ENCODE measurements at regions of chr11 and their contacts with region 1.

Region 1: DNA sequence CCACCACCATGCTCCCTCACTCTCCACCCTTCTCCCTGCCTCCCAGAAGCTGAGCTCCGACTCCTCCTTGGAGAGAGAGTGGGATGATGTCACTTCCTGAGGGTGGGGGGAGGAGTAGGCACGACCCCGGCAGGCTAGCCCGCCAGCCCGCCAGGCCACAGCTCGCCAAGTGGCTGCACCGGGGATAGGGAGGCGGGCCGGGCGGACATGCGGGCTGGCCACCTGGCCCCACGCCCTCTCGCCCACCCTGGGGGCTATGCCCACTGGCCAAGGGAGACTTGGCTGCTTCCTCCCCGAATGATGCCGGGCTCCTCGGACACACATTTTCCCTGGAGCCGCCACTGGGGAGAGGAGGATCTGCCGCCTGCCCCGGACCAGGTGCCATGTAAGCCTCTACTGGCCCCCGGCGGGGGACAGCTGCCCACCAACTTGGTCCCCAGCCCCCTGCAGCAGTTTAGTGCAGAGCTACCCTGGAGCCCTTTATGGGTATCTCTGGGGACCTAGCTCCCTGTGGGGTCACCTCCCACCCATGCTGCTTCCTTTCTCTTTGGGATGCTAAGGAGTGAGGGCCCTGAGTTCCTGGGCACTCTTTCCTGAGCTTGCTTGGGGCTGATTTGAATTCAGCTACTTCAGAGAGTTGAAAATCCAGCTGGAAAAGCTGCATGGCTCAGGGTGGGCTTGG is 33.7 kb upstream of the MYRF start:
- DNase-seq: peak; percentile 45

Region 2: GRCh38 chr11:61683961-61684869 is 34.5 kb before region 1 on chr11:
- CTCF ChIA-PET with region 1: no interaction called
- POLR2A ChIA-PET with region 1: interaction called, 10 read pairs
- DNase-seq: no peak

Region 3: DNA sequence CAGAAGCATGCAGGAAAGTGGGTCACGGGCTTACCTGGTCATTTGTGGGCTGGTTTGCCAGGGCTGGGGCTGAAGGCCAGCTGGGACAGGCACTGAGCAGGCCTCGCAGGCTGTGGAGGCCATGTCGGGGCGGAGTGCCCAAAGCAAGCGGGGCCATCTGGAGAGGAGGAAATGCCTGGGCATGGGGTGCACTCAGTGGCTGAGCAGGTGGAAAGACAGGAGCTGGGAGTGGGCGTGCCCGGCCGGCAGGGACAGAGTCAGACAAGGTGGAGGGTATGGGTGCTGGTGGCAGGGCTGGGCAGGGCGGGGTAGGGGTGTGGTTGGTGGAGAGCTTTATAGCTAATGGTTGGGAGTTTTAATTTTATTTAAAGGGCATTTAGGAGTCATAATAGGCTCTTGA is 11.2 kb before region 1 on chr11:
- CTCF ChIA-PET with region 1: interaction called, 3 read pairs
- POLR2A ChIA-PET with region 1: interaction called, 29 read pairs
- DNase-seq: no peak

Region 4: GRCh38 chr11:61733120-61733978 is 14.6 kb after region 1 on chr11:
- CTCF ChIA-PET with region 1: interaction called, 8 read pairs
- POLR2A ChIA-PET with region 1: interaction called, 22 read pairs
- DNase-seq: peak; percentile 95

Region 5: GRCh38 chr11:61756452-61757212 is 37.9 kb after region 1 on chr11:
- CTCF ChIA-PET with region 1: no interaction called
- POLR2A ChIA-PET with region 1: no interaction called
- DNase-seq: no peak